ENCODE measurements at regions of chr4 and their contacts with region 1.

Region 1: DNA sequence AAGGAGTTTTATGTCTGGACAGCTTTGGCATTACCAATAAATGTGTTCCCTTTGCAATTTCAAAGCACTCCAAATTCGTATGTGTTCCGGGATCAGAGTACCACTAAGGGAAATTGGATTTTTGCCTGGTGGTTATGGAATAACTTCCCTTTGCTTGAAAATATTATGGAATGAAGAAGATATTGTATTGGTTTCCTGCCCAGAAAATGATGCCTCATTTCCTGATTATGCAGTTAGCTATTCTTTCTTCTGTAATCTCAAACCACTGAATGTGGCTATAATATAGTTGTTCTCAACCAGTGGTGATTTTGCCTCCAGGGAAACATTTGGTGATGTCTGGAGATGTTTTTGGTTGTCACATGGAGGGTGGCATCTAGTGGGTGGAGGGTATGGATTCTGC is 142.9 kb downstream of the PCDH7 start:
- DNase-seq: no peak
- ATAC-seq: no peak
- H3K4me3 ChIP-seq: no peak overlapping the region
- H3K27ac ChIP-seq: peak overlapping the region; percentile 100
- H3K4me1 ChIP-seq: peaks cover 90 to 100% of the 10 kb centered on the region in 2 experiments
- H3K27me3 ChIP-seq: no peaks in the 10 kb centered on the region
- CTCF ChIP-seq: no peak
- POLR2A ChIP-seq: no peak
- RAD21 ChIP-seq: peak; percentile 34; the same call in 1 of the 2 replicates

Region 2: DNA sequence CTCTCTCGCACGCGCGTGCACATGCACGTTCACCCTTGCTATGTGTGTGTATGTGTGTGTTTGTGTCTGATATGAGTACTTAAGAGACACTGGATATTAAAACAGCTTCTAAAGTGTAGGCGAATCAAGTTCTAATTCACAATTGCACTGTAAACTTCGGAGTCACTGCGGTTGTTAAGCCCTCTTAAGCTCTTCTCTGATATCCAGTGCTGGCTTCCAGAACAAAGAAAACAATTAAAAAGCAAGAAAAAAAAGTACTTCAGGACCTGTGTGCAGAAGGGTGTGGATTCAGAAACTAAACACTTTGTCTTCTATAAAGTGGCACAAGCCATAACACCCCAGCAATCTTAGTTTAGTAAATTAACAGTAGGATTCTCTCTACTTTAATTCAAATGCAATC is 157.3 kb after region 1 on chr4:
- CTCF ChIA-PET with region 1: no interaction called
- POLR2A ChIA-PET with region 1: no interaction called
- RAD21 ChIA-PET with region 1: no interaction called
- intact Hi-C with region 1: loop called (anchors 10 kb)
- DNase-seq: no peak
- ATAC-seq: peak; percentile 38
- H3K4me3 ChIP-seq: peak overlapping the region in 1 of 2 experiments; percentile 24; a peak in 2 of 4 replicates
- H3K27ac ChIP-seq: peak overlapping the region; percentile 91
- H3K4me1 ChIP-seq: peaks cover 95% of the 10 kb centered on the region in 2 experiments
- H3K27me3 ChIP-seq: no peaks in the 10 kb centered on the region
- CTCF ChIP-seq: no peak
- POLR2A ChIP-seq: no peak
- RAD21 ChIP-seq: no peak